Mammary epithelial cell (primary cell): ENCODE measurements at regions of chr3 and their contacts with region 1.

Region 1: DNA sequence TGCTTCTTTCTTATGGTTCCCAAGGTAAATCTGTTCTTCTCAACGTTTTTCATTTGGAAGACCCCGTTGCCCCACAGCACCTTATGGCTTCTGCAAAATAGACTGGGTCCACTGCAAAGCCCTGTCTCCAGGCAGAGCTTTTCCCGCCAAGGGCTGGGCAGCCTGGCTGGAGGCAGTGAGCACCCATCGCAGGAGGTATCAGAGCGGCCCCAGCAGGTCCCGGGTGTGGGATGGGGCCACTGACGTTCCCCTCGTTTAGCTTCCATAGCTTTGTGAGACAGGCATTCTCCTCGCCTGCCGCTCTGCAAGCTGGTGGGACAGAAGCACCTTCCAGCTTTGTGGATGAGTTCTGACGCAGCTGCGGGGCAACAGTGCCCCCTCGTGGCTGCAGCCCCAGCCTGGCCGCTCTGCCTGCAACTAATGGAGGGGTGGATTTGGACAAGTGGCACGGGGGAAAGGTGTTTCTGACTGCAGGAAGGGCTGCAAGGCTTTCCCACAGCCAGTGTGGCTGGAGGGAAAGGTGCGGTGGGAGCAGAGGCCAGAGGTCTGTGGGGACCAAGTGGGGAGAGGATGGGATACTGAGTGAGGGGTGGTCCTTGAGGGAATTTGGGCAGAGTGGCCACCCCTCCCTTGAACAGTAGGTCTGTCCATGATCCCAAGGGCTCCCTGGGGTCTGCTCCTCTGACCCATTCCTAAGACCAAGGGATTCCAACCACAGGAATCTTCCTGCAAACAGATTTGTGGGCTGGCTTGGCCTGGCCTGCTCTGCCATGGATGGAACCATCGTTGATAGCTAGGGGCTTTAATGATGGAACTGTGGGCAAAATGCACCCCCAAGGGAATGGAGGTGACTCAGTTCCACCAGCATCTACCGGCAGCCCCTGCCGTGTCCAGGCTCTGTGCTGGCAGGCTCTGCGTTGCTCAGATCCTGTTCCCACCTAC is 99.4 kb downstream of the FBLN2 start:
- DNase-seq: peak; percentile 70
- H3K4me3 ChIP-seq: no peak overlapping the region
- H3K27ac ChIP-seq: no peak overlapping the region
- H3K4me1 ChIP-seq: peaks cover 22% of the 10 kb centered on the region
- H3K27me3 ChIP-seq: no peaks in the 10 kb centered on the region
- CTCF ChIP-seq: peak; percentile 97 to 100

Region 2: DNA sequence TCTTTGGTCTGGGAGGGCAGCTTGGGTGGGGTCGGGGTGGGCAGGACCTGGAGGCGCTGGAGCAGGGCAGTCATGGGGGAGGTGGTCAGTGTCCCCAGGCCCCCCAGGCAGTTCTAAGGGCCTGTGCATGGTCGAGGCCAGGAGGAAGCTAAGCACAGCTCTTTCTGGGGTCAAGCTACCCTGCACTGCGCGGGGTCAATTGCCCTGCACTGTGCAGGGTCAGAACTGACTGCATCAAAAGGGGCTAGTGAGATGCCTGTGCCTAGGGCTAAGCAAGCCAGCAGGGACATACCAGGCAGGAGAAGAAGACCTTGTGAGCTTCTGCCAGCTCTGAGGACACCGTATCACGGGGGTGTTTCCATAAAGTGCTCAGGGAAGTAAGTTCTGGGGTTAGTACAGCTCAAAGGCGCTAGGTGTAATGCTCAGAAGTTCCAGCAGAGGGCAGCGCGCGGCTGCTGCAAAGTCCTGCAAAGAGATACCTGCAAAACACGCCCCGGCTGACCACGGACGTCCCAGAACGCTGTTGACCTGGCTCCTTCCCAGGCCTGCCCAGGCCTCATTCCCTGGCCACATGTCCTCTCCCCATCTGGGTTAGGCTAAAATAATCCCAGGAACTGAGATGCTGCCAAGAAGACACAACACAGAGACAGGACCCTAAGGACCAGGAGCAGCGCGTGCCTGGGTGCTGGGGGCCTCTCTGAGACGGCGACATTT is 556.3 kb before region 1 on chr3:
- CTCF ChIA-PET with region 1: interaction called, 3 read pairs
- dilution Hi-C with region 1: no loop called
- in situ Hi-C with region 1: loop called (anchors 5 to 10 kb)
- intact Hi-C with region 1: loop called (anchors 1 kb)
- DNase-seq: peak; percentile 52
- H3K4me3 ChIP-seq: no peak overlapping the region
- H3K27ac ChIP-seq: no peak overlapping the region
- H3K4me1 ChIP-seq: no peaks in the 10 kb centered on the region
- H3K27me3 ChIP-seq: no peaks in the 10 kb centered on the region
- CTCF ChIP-seq: peak; percentile 87 to 93

Region 3: GRCh38 chr3:13452490-13453335 is 195.6 kb before region 1 on chr3:
- CTCF ChIA-PET with region 1: interaction called, 9 read pairs
- dilution Hi-C with region 1: no loop called
- in situ Hi-C with region 1: no loop called
- intact Hi-C with region 1: loop called (anchors 1 kb)
- DNase-seq: peak; percentile 38
- H3K4me3 ChIP-seq: no peak overlapping the region
- H3K27ac ChIP-seq: peak overlapping the region; percentile 72
- H3K4me1 ChIP-seq: peaks cover 10% of the 10 kb centered on the region
- H3K27me3 ChIP-seq: no peaks in the 10 kb centered on the region
- CTCF ChIP-seq: peak; percentile 63 to 70

Region 4: DNA sequence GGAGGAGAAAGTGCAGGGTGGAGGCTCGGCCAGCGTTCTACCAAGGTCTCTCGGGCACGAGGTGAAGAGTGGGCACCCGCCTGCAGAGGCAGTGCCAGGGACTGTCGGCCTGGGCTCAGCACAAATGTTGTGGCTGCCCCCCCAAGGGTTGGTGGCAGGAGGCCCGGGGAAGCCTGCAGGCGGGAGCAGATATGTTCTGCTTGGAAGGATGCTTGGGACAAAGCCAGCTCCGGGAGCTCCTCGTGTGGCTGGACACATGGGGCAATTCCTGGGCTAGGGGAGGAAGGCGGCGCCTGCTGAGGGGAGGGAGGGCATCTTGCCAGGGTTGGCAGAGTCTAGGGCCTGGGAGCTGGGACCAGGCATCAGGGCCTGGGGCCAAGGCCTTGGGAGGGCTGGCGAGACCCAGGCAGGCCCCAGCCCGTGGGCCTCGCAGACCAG is 129.8 kb before region 1 on chr3:
- CTCF ChIA-PET with region 1: no interaction called
- dilution Hi-C with region 1: loop called (anchors 5 kb)
- in situ Hi-C with region 1: no loop called
- intact Hi-C with region 1: no loop called
- DNase-seq: no peak
- H3K4me3 ChIP-seq: no peak overlapping the region
- H3K27ac ChIP-seq: no peak overlapping the region
- H3K4me1 ChIP-seq: peaks cover 9% of the 10 kb centered on the region
- H3K27me3 ChIP-seq: no peaks in the 10 kb centered on the region
- CTCF ChIP-seq: no peak

Region 5: DNA sequence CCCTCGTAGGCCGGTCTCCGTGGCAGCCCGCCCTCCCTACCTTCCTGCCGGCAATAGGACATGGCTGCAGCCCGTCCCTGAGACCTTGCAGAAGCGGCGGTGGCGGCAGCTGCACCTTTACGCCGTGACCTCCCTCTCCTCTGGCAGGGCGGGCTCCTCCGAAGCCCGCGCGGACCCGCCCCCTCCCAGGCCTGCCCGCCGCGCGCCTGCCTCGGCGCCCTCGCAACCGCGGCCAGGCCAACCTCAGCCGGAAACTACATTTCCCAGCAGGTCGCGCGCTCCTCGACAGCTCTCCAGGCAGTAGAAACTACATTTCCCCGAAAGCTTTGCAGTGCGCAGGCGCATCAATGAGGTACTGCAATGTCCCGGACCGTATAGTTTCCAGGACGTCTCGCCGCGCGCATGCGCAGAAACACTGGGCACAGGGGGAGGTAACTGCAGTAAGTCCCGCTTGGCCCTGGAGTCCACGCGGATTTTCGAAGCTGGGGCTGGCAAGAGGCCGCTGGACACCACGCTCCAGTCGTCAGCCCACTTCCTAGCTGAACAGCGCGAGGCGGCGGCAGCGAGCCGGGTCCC is 476.4 kb after region 1 on chr3 and contains the starts of genes CHCHD4 and TMEM43:
- CTCF ChIA-PET with region 1: no interaction called
- dilution Hi-C with region 1: no loop called
- in situ Hi-C with region 1: no loop called
- intact Hi-C with region 1: loop called (anchors 10 kb)
- DNase-seq: peak; percentile 98
- H3K4me3 ChIP-seq: peak within 1 kb of the TSS; percentile 79 to 98 (median 79)
- H3K27ac ChIP-seq: peak within 1 kb of the TSS; percentile 91
- H3K4me1 ChIP-seq: peaks cover 27% of the 10 kb centered on the region
- H3K27me3 ChIP-seq: no peaks in the 10 kb centered on the region
- CTCF ChIP-seq: no peak
- total RNA-seq, gene CHCHD4: 7.2 to 22.9 TPM
- total RNA-seq, gene TMEM43: 85.2 to 143 TPM